ENCODE measurements at regions of chr10 and their contacts with region 1.

Region 1: DNA sequence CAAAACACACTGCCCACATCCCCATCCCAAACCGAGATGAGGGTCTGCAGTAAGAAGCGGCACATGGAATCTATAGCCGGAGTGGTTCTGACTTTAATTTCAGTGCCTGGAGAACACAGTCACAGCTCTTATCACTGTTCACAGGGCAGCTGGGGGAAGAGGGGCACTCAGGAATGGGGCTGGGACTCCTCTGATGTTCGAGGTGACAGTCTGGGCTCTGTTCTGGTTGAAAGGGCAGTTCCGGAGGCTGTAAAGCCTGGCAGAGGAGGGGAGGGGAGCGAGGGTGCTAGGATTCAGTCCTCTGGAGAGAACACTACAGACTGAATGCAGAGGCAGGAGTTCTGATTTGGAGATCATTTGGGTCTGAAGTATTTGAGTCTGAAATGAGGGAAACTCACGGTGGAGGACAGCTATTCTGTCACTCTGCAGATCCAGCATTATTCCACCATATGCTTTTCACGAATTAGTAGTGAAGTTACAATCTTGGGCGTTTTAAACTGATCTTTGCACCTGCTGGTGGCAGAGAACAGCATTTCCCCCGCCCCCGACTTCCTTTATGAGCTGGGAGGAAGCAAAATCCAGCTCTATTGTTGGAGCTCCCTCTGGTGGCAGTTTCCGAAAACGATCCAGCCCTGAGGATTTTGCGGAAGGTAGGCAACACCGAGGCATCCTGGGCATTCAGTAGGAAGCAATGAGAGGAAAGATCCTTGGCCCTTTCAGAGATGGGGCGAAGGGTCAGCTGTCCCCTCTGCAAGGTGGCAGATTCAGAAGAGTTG is 22.7 kb upstream of the KCNK18 start:
- DNase-seq: peak; percentile 74 to 96 (median 86)

Region 2: DNA sequence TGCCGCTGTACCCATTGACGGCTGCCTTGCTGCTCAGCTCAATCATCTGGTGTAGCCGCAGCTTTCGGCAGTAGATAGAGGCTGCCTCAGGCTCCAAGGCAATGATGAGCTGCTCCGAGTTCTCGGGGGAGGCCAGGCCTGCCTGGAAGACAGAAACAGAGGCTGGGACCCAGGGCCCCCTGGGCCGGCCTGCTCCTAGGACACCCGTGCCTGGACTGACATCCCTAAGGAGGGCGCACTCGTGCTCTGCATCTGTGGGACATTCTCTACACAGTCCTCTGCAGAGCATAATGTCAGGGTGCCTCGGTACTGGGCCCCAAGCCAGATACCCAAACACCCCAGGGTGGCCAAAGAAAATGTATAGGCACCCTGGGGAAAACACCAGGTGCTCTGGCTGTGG is 490.8 kb before region 1 on chr10:
- intact Hi-C with region 1: loop called (anchors 5 kb)
- DNase-seq: peak in 1 of 10 donors; percentile 85

Region 3: GRCh38 chr10:116796910-116797513 is 377.6 kb before region 1 on chr10:
- intact Hi-C with region 1: loop called (anchors 1 kb)
- DNase-seq: peak; percentile 58 to 97 (median 85)

Measured in posterior cingulate gyrus (tissue), 11 donors.